ENCODE measurements at regions of chr7 and their contacts with region 1.

Region 1: DNA sequence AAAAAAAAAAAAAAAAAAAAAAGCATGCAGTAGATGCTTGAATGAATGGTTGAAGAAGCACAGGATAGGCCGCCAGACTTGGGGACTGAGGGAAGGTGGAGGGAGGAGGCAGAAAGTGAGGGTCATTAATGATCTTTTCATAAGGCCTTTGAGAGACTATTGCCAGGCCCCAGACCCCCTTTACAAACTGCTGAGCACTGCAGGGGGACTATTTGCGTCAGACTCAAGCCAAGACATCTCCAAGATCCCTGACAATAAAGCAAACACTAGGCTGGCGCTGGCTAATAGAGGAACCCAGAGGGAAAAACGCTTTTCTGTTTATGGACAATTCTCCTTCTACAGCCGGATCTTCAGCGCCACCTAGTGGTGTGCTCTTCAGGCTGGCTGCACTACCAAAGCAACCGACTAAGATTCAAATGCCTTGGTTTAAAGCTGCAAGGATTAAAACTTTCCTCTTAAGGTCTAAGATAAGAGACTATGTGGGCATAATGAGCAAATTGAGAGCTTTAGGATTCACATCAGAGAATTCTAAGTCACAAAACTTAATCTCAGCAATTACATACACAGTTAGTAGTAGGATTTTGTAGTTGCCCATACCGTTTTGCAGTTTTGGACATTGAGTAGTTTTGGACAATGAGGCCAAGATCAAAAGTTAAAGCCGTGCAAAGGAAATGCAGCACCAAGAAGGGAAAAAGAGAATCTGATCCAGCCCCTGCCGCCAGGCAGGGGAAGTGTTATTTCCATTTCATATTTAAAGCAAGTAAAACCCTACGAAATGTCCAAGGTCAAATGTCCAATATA is 17.9 kb upstream of the AGK start:
- DNase-seq: peak; percentile 89

Region 2: GRCh38 chr7:141014524-141015395 is 518.6 kb before region 1 on chr7 and contains the start of gene MRPS33:
- in situ Hi-C with region 1: loop called (anchors 25 kb)
- DNase-seq: peak; percentile 99
- total RNA-seq, gene MRPS33: 136 and 147 TPM in 2 replicates